HCT116 (cell line): ENCODE measurements at regions of chr4 and their contacts with region 1.

Region 1: GRCh38 chr4:67087897-67088296 is 457.4 kb downstream of the CENPC start:
- DNase-seq: peak; percentile 1
- ATAC-seq: no peak
- H3K4me3 ChIP-seq: no peak overlapping the region
- H3K27ac ChIP-seq: no peak overlapping the region
- H3K4me1 ChIP-seq: no peaks in the 10 kb centered on the region
- H3K27me3 ChIP-seq: no peaks in the 10 kb centered on the region
- CTCF ChIP-seq: peak in 2 of 3 experiments; percentile 34 to 46; a peak in 3 of 6 replicates
- POLR2A ChIP-seq: no peak
- RAD21 ChIP-seq: 0 out of 2 replicates have a peak, but pooled peaks have one; percentile 18

Region 2: GRCh38 chr4:67103001-67103747 is 15.3 kb after region 1 on chr4:
- CTCF ChIA-PET with region 1: no interaction called
- POLR2A ChIA-PET with region 1: no interaction called
- RAD21 ChIA-PET with region 1: no interaction called
- intact Hi-C with region 1: no loop called
- DNase-seq: no peak
- ATAC-seq: no peak
- H3K4me3 ChIP-seq: no peak overlapping the region
- H3K27ac ChIP-seq: no peak overlapping the region
- H3K4me1 ChIP-seq: no peaks in the 10 kb centered on the region
- H3K27me3 ChIP-seq: no peaks in the 10 kb centered on the region
- CTCF ChIP-seq: no peak
- POLR2A ChIP-seq: no peak
- RAD21 ChIP-seq: no peak

Region 3: DNA sequence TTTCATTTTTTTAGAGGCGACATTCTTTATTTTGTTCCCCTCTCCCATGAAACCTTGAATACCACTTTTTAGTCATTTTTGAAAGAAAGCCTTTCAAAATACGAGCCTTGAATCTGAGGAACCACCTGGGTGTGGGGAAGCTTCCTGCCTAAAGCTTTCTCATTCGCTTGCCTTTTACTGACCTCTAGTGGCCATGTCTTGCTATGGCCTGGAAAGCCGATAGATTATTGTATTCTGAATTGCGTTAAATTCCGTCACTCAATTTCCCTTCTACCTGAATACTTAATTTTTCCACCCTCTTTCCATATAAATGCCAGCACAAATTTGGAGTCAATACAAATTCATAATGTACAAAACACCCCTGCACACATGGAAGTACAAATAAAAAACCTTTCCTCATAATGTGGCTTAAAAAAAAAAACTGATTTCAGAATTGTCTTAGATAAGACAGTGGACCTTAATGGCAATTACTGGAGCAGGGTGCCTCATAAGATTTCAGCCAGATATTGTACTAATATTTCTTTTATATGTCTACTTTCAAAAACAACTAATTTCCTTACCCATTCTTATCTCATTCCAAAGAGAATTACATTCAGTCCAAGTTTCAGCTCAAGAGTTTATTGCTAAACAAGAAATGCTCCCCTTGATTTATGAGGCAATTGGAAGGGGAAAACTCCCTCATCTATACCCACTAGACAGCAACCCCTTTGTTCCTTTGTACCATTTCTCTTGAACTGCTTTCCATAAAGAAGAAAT is 239.5 kb after region 1 on chr4:
- CTCF ChIA-PET with region 1: interaction called, 4 read pairs
- POLR2A ChIA-PET with region 1: no interaction called
- RAD21 ChIA-PET with region 1: no interaction called
- intact Hi-C with region 1: loop called (anchors 5 kb)
- DNase-seq: peak; percentile 32
- ATAC-seq: peak; percentile 75
- H3K4me3 ChIP-seq: no peak overlapping the region
- H3K27ac ChIP-seq: no peak overlapping the region
- H3K4me1 ChIP-seq: no peaks in the 10 kb centered on the region
- H3K27me3 ChIP-seq: no peaks in the 10 kb centered on the region
- CTCF ChIP-seq: peak; percentile 21 to 89 (median 88); a peak in 5 of 6 replicates
- POLR2A ChIP-seq: no peak
- RAD21 ChIP-seq: peak; percentile 70